Motor neuron (in vitro differentiated cells): ENCODE measurements at regions of chr9 and their contacts with region 1.

Region 1: DNA sequence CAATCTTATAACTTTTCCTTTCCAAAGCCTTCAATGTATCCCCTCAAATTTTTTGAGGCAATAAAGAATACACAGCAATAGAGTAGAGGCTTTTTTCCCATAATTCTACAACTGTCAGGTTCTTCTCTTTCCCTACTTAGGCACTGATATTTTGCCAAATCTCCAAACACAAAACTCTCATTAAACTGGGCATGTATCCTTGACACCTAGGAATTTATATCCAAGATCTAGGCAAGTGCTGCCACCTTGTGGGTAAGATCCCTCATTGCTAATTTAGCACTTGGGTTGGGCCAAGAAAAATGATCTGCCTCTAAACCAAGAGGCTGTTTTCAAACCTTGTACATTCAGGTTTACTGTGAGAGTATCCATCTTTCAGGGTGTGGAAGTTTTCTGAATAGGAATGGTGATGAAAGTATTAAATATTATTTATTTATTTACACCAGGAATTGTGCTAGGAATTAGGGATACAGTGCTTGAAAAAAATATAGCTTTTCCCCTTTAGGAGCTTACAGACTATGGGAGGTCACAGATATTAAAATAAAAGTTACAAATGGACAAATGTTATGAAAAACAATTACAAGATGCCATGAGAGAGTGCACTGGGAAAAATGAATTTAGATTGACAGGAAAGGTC is 17.6 kb downstream of the TSTD2 start:
- ATAC-seq: peak in 6 of 8 experiments; percentile 44 to 79 (median 64)
- H3K4me3 ChIP-seq: no peak overlapping the region
- H3K27ac ChIP-seq: no peak overlapping the region
- H3K4me1 ChIP-seq: no peaks in the 10 kb centered on the region

Region 2: DNA sequence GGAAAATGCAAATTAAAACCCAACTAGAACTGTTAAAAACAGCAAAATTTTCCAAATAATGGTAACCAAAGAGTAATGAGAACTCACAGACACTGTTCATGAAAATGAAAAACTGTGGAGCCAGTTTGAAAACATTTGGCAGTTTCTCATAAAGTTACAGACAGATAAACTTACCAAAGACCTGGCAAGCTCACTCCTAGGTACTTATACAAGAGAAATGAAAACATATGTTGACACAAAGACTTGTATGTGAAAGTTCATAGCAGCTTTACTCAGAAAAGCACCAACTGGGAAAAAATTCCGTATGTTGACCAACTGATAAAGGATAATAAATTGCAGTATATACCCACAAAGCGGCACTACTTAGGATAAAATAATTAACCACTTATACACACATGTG is 771.5 kb before region 1 on chr9:
- in situ Hi-C with region 1: no loop called
- ATAC-seq: no peak
- H3K4me3 ChIP-seq: no peak overlapping the region
- H3K27ac ChIP-seq: no peak overlapping the region
- H3K4me1 ChIP-seq: no peaks in the 10 kb centered on the region

Region 3: DNA sequence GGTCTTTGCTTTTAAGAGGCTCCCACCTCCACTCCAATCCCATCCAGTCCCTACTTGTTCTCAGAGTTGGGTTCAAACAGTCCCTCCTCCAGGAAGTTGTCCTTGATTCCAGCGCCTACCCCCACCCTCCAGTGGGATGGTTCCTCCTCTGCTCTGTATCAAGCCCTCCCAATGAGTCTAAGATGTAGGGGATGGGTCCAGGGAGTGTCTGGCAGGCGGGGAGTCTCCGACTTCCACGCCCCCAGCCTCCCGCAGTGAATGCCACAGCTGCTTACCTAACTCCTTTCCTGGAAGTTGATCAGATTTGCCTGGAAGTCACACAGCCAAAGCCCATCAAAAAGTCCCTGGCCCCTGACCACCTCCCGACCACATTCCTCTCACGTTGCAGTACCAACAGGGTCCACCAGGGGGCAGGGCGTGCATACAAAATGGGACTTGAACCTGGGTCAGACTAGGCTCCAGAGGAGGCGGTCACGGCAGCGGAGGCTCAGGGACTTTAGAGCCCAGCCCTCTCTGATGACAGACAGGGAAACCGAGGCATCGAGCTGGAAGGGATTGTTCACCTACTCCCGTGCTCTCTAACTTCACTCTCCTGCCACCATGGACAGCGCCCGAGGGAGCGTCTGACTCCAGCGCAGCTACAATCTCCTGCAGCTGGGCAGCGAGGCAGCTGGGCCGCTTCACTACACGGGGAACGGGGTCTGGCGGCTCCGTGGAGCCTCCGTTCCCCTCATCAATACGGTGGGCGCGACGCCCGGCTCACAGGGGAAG is 228.6 kb before region 1 on chr9:
- in situ Hi-C with region 1: loop called in 2 of 9 experiments (anchors 25 kb)
- ATAC-seq: peak; percentile 45 to 88 (median 66)
- H3K4me3 ChIP-seq: no peak overlapping the region
- H3K27ac ChIP-seq: no peak overlapping the region
- H3K4me1 ChIP-seq: peaks cover 3 to 9% of the 10 kb centered on the region in 2 donors

Region 4: DNA sequence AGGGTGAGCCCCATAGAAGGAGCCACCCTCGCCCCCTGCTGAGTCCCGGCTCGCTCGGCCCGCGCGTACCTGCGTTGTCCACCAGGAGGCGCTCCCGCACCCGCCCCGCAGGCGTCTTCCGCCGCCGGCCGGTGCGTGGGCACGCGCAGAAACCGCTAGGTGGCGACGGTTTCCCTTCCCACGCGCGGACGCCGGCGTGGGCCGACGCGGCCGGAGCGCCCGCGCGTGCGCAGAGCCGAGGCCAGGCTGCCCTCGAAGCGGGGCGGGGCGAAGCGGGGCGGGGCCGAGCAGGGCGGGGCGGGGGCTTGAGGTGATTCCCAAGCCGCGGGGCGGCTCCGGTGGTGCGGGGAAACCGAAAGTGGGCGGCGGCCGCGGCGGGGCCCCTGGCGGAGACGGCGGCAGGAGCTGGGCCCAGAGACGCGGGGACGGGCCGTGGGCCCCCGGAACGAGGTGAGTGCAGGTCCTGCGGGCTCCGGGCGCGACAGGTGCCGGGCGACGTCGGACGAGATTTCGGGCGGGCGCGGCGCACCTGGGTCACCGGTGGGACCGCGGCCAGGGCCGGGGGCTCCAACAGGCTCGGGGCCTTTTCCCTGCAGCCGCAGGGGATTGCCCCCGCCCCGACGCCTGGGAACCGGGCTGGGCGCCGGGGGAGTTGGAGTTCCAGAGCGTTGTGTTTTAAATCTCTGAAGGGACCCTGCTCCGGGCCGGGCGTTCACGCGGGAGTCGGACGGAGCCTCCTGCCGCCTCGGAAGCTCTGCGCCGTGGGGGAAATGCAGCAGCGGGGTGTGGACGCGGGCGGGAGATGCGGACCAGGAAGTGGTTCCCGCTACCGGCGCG is 203.5 kb before region 1 on chr9 and contains the start of gene TDRD7:
- in situ Hi-C with region 1: loop called in 1 of 9 experiments (anchors 10 kb)
- ATAC-seq: peak; percentile 84 to 95 (median 91)
- H3K4me3 ChIP-seq: peak within 1 kb of the TSS; percentile 69 to 85 (median 73)
- H3K27ac ChIP-seq: no peak within 1 kb of the TSS
- H3K4me1 ChIP-seq: peaks cover 0 to 3% of the 10 kb centered on the region in 2 donors
- total RNA-seq, gene TDRD7: 2.0 to 55.6 (median 4.3) TPM

Region 5: GRCh38 chr9:97468658-97469448 is 146.7 kb before region 1 on chr9:
- in situ Hi-C with region 1: loop called in 4 of 9 experiments (anchors 25 kb)
- ATAC-seq: peak; percentile 90 to 100 (median 99)
- H3K4me3 ChIP-seq: no peak overlapping the region
- H3K27ac ChIP-seq: no peak overlapping the region
- H3K4me1 ChIP-seq: no peaks in the 10 kb centered on the region